Activated CD4-positive, alpha-beta memory T cell treated with anti-CD3 and anti-CD28 coated beads, Interleukin-2, amount 10 ng/mL, durations not matched to agents 7 days and 5 days (primary cell): ENCODE measurements at regions of chr3 and their contacts with region 1.

Region 1: GRCh38 chr3:141553055-141553454 is 66.2 kb downstream of the RASA2 start:
- DNase-seq: peak; percentile 23
- H3K4me3 Mint-ChIP-seq: no peak overlapping the region
- H3K27ac Mint-ChIP-seq: peak overlapping the region; percentile 92
- H3K4me1 Mint-ChIP-seq: peaks cover 39% of the 10 kb centered on the region
- H3K27me3 Mint-ChIP-seq: no peaks in the 10 kb centered on the region

Region 2: DNA sequence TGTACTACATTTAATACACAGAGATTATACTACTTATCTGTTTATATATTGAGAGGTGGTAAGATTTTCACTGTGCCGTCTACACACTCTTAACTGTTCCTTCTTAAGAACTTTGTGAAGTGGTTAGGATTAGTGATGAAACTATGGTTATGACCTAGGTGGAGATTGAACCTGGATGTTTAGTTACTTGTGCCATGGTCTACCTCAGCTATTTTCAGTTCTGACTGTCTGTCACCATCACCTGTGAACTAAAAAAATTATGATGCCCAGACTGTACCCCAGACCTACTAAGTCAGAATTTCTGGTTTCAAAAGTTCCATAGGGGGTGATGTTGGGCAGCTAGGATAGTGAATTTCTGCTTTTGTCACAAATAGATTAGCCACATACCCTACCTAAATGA is 59.9 kb before region 1 on chr3:
- CTCF ChIA-PET with region 1: interaction called, 12 read pairs
- POLR2A ChIA-PET with region 1: interaction called, 97 read pairs
- DNase-seq: no peak
- H3K4me3 Mint-ChIP-seq: no peak overlapping the region
- H3K27ac Mint-ChIP-seq: peak overlapping the region; percentile 33
- H3K4me1 Mint-ChIP-seq: peaks cover 86% of the 10 kb centered on the region
- H3K27me3 Mint-ChIP-seq: no peaks in the 10 kb centered on the region

Region 3: GRCh38 chr3:141498598-141499223 is 54.3 kb before region 1 on chr3:
- CTCF ChIA-PET with region 1: interaction called, 10 read pairs
- POLR2A ChIA-PET with region 1: interaction called, 47 read pairs
- DNase-seq: peak; percentile 93
- H3K4me3 Mint-ChIP-seq: peak overlapping the region; percentile 53
- H3K27ac Mint-ChIP-seq: peak overlapping the region; percentile 85
- H3K4me1 Mint-ChIP-seq: peaks cover 70% of the 10 kb centered on the region
- H3K27me3 Mint-ChIP-seq: no peaks in the 10 kb centered on the region